PC-3 (cell line): ENCODE measurements at regions of chr4 and their contacts with region 1.

Region 1: GRCh38 chr4:55635741-55636655 is at the start of gene NMU:
- DNase-seq: peak; percentile 79
- ATAC-seq: peak; percentile 84
- H3K4me3 ChIP-seq: peak within 1 kb of the TSS; percentile 69
- H3K27ac ChIP-seq: no peak within 1 kb of the TSS
- H3K4me1 ChIP-seq: peaks cover 13% of the 10 kb centered on the region
- H3K27me3 ChIP-seq: no peaks in the 10 kb centered on the region
- CTCF ChIP-seq: peak; percentile 43; the same call in 1 of the 2 replicates
- total RNA-seq, gene NMU: 28.5 and 40.2 TPM in 2 replicates

Region 2: GRCh38 chr4:55554453-55555030 is 81.5 kb before region 1 on chr4:
- CTCF ChIA-PET with region 1: interaction called, 3 read pairs
- POLR2A ChIA-PET with region 1: no interaction called
- intact Hi-C with region 1: loop called (anchors 5 kb)
- DNase-seq: peak; percentile 71
- ATAC-seq: 0 out of 2 replicates have a peak, but pooled peaks have one; percentile 4
- H3K4me3 ChIP-seq: no peak overlapping the region
- H3K27ac ChIP-seq: no peak overlapping the region
- H3K4me1 ChIP-seq: peaks cover 26% of the 10 kb centered on the region
- H3K27me3 ChIP-seq: no peaks in the 10 kb centered on the region
- CTCF ChIP-seq: peak; percentile 83